IMR-90 (cell line): ENCODE measurements at regions of chr9 and their contacts with region 1.

Region 1: DNA sequence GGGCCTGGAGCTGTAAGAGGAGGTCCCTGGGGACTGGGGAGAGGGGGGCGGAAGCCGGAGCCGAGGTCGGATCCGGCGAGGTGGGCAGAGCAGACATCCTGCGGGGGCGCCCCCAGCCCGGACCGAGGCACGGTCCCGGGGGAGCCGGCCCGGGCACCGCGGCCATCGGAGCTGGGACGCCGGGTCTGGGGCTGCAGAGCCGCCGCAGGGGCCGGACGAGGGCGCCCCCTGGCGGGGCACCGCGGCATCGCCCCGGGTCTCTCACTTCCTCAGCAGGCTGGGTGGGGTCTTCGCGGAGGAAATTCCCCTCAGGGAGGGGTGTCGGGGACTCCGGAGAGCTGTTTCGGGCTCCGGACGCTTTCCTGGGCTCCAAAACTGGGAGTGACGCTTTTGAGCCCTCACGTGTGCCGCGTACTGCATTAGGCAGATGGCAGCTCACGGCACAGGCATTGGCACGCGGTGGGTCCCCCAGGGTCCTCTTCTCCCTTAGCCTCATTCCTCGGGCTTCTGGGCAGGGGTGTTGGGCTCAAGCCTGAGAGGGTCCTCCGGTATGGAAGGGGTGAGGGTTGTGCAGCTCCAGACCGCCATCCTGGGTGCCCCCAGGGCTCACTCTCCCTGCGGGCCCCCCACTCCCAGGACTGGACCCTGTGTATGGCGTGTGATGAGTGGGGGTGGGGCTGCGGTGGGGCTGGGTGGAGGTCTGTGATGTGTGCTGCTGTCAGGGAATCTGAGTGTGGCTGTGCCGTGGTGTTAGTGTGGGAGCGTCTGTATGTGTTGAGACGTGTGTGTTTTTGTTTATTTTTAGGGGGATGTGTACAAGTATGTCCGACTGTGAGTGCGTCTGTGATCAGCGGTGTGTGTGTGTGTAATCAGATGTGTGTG is 29.6 kb downstream of the LHX2 start:
- DNase-seq: no peak
- ATAC-seq: peak; percentile 60
- H3K4me3 ChIP-seq: peak overlapping the region; percentile 17; the same call in 1 of the 2 replicates
- H3K27ac ChIP-seq: no peak overlapping the region
- H3K4me1 ChIP-seq: no peaks in the 10 kb centered on the region; the same call in 1 of the 2 replicates
- H3K27me3 ChIP-seq: peaks cover 80% of the 10 kb centered on the region
- CTCF ChIP-seq: peak; percentile 78
- POLR2A ChIP-seq: no peak
- RAD21 ChIP-seq: peak; percentile 72

Region 2: GRCh38 chr9:123724211-123724796 is 316.9 kb before region 1 on chr9:
- CTCF ChIA-PET with region 1: interaction called, 9 read pairs
- POLR2A ChIA-PET with region 1: no interaction called
- dilution Hi-C with region 1: no loop called
- in situ Hi-C with region 1: no loop called
- intact Hi-C with region 1: loop called (anchors 1 kb)
- DNase-seq: peak; percentile 57
- ATAC-seq: peak; percentile 49; the same call in 1 of the 2 replicates
- H3K4me3 ChIP-seq: no peak overlapping the region
- H3K27ac ChIP-seq: no peak overlapping the region
- H3K4me1 ChIP-seq: no peaks in the 10 kb centered on the region
- H3K27me3 ChIP-seq: no peaks in the 10 kb centered on the region
- CTCF ChIP-seq: peak; percentile 41
- POLR2A ChIP-seq: no peak
- RAD21 ChIP-seq: peak; percentile 57

Region 3: GRCh38 chr9:123784518-123784917 is 256.7 kb before region 1 on chr9:
- CTCF ChIA-PET with region 1: no interaction called
- POLR2A ChIA-PET with region 1: no interaction called
- dilution Hi-C with region 1: no loop called
- in situ Hi-C with region 1: no loop called
- intact Hi-C with region 1: no loop called
- DNase-seq: peak; percentile 91
- ATAC-seq: peak; percentile 86
- H3K4me3 ChIP-seq: no peak overlapping the region
- H3K27ac ChIP-seq: peak overlapping the region; percentile 38; the same call in 1 of the 2 replicates
- H3K4me1 ChIP-seq: peaks cover 7% of the 10 kb centered on the region; the same call in 1 of the 2 replicates
- H3K27me3 ChIP-seq: no peaks in the 10 kb centered on the region
- CTCF ChIP-seq: no peak
- POLR2A ChIP-seq: no peak
- RAD21 ChIP-seq: no peak

Region 4: GRCh38 chr9:124764774-124765438 is 723.7 kb after region 1 on chr9:
- CTCF ChIA-PET with region 1: no interaction called
- POLR2A ChIA-PET with region 1: no interaction called
- dilution Hi-C with region 1: no loop called
- in situ Hi-C with region 1: no loop called
- intact Hi-C with region 1: no loop called
- DNase-seq: no peak
- ATAC-seq: peak; percentile 37
- H3K4me3 ChIP-seq: no peak overlapping the region
- H3K27ac ChIP-seq: no peak overlapping the region
- H3K4me1 ChIP-seq: no peaks in the 10 kb centered on the region
- H3K27me3 ChIP-seq: peaks cover 75% of the 10 kb centered on the region
- CTCF ChIP-seq: peak; percentile 40
- POLR2A ChIP-seq: no peak
- RAD21 ChIP-seq: peak; percentile 42